Posterior vena cava (tissue), 2 donors: ENCODE measurements at regions of chr21 and their contacts with region 1.

Region 1: GRCh38 chr21:36411301-36411700 is 26.1 kb downstream of the CHAF1B start:
- DNase-seq: no peak

Region 2: DNA sequence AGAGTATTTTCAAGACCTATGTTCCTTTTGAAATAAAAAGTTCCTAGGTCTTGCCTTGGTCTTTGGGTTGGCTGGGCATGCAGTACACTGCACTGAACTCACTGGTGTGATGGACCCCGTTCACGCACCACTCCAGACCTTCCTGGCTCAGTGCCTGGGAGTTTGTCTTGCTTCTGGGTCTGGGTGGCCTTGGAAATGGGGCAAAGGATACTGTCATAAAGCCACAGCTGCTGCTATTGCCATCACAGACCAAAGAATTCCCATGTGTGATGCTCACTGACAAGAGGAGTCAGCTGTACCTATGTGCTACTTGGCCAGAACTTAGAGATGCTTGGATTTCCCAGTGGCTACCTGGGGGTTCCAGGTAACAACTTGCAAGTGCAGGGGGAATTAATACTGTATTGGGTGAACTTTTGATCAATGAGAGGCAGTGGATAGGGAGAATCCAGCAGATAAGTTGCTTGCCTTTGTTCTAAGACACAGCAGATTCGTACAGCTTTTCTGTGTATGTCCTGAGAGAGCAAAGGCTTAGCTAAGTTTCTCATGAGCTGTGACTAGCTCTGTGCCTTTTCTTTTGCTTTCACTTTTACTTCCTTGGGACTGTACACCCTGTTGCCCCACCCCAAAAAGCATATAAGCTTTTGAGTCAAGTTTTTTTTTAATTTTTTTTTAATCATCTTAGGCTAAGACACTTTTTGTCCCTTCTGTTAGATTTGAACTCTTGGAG is 1477.5 kb before region 1 on chr21:
- intact Hi-C with region 1: loop called in 1 of 2 experiments (anchors 5 kb)
- DNase-seq: no peak

Region 3: DNA sequence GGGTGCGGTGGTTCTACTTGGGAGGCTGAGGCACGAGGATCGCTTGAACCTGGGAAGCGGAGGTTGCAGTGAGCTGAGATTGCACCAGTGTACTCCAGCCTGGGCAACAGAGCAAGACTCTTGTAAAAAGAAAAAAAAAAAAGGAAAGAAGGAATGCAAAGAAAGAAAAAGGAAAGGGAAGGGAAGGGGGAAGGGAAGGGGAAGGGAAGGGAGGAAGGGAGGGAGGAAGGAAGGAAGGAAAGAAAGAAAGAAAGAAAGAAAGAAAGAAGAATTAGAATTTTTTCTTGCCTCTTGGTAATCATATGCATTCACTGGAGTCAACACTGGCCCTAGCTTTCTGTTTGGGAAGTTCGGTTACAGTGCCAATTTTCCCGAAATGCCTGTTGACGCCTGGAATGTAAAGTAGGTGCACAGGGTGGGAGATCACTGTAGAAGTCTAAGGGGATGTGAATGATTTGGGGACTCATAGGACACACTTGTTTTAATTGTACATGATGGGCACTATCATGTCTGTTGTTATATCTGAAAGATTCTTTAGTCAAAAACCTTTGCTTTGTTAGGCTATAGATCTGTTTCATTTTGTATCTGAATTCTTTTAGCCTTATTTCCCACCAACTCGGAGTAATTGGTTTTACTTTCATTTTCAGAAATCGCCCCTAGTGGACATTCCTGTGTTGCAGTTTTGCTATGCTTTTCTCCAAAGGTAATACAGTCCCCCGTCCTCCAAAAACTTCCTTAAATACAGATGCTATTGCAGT is 151.1 kb before region 1 on chr21:
- intact Hi-C with region 1: no loop called
- DNase-seq: no peak